Astrocyte of the cerebellum (primary cell): ENCODE measurements at regions of chr4 and their contacts with region 1.

Region 1: GRCh38 chr4:188941524-188942119 is 802.4 kb downstream of the TRIML1 start:
- DNase-seq: peak; percentile 85
- H3K4me3 ChIP-seq: no peak overlapping the region
- CTCF ChIP-seq: no peak

Region 2: GRCh38 chr4:188986271-188986689 is 44.7 kb after region 1 on chr4:
- in situ Hi-C with region 1: loop called (anchors 5 kb)
- DNase-seq: peak; percentile 19
- H3K4me3 ChIP-seq: no peak overlapping the region
- CTCF ChIP-seq: no peak

Region 3: GRCh38 chr4:189069772-189070171 is 128.2 kb after region 1 on chr4:
- in situ Hi-C with region 1: no loop called
- DNase-seq: no peak
- H3K4me3 ChIP-seq: no peak overlapping the region
- CTCF ChIP-seq: no peak